Heart right ventricle (tissue), 16 donors: ENCODE measurements at regions of chr1 and their contacts with region 1.

Region 1: GRCh38 chr1:53860967-53861411 is 22.9 kb upstream of the NDC1 start:
- DNase-seq: peak in 1 of 2 donors; percentile 28
- ATAC-seq: peak in 6 of 8 donors; percentile 51 to 72 (median 64)
- H3K4me3 ChIP-seq: no peak overlapping the region
- H3K27ac ChIP-seq: no peak overlapping the region
- H3K4me1 ChIP-seq: no peaks in the 10 kb centered on the region
- H3K27me3 ChIP-seq: no peaks in the 10 kb centered on the region
- CTCF ChIP-seq: peak; percentile 43 to 82 (median 74)

Region 2: GRCh38 chr1:53620061-53620855 is 240.7 kb before region 1 on chr1:
- intact Hi-C with region 1: no loop called
- DNase-seq: no peak
- ATAC-seq: no peak
- H3K4me3 ChIP-seq: no peak overlapping the region
- H3K27ac ChIP-seq: no peak overlapping the region
- H3K4me1 ChIP-seq: no peaks in the 10 kb centered on the region
- H3K27me3 ChIP-seq: no peaks in the 10 kb centered on the region
- CTCF ChIP-seq: no peak

Region 3: GRCh38 chr1:53929246-53929960 is 68.4 kb after region 1 on chr1:
- intact Hi-C with region 1: no loop called
- DNase-seq: no peak
- ATAC-seq: no peak
- H3K4me3 ChIP-seq: no peak overlapping the region
- H3K27ac ChIP-seq: no peak overlapping the region
- H3K4me1 ChIP-seq: no peaks in the 10 kb centered on the region
- H3K27me3 ChIP-seq: no peaks in the 10 kb centered on the region
- CTCF ChIP-seq: no peak

Region 4: DNA sequence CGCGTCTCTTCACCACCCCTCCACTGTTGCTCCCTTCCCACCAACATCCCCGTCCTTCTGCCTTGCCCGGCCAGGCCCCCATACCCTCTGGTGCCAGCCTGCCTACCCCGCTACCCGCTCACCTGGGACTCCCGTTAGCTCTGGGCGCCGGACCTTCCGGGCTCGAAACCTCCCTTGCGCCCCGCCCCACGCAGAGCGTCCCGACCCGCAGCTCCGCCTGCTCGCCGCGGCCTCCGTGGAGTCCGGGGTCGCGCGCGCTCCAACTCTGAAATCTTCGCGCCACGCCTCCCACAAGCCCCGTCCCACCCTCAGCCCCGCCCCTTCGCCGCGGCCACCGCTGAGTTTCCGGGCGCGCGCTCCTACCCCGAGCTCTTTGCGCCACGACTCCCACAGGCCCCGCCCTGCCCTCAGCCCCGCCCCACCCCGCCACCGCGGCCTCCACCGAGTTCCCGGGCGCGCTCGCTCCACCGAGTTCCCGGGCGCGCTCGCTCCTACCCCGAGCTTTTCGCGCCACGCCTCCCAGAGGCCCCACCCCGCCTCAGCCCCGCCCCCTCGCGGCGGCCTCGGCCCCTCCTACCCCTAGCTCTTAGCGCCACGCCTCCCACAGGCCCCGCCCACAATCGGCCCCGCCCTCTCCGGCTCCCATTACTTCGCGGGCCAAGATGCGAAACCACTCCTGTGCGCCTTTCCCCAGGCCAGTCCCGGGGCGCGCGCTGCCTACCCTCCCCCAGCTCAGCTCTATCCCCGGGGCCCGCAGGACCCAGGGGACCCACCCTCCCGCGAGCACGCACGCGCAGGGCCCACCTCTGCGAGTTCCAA is 84.7 kb after region 1 on chr1 and contains the start of gene IFT25:
- intact Hi-C with region 1: loop called in 2 of 10 experiments (anchors 5 kb)
- DNase-seq: peak; percentile 96 to 98
- ATAC-seq: peak; percentile 93 to 98 (median 94)
- H3K4me3 ChIP-seq: peak within 1 kb of the TSS; percentile 59 to 97 (median 87)
- H3K27ac ChIP-seq: peak within 1 kb of the TSS; percentile 83 to 95 (median 89)
- H3K4me1 ChIP-seq: peaks cover 0 to 52% (median 39%) of the 10 kb centered on the region in 9 donors
- H3K27me3 ChIP-seq: no peaks in the 10 kb centered on the region
- CTCF ChIP-seq: peak in 1 of 9 donors; percentile 32
- total RNA-seq, gene IFT25: 7.8 to 16.0 (median 10.7) TPM

Region 5: DNA sequence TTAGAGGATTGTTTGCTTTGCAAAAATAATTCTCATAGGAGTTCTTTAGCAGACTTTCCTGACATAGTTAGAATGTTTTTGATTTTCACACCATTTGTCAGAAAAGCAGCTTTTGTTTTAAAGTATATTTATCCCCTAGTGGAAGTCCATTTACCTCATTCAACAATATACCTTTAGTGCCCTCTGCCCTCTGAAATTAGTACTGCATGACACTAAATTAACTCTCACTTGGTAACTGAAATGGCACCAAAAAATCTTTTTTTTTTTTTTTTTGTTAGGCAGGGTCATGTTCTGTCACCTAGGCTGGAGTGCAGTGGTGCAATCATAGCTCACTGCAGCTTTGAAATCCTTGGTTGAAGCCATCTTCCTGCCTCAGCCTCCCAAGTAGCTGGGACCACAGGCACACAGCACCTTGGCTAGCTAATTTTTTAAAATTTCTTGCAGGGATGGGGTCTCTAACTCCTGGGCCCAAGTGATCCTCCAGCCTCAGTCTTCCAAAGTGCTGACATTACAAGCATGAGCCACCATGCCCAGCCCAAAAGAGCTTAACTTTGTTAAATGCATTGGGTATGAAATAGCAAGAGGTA is 98.8 kb after region 1 on chr1:
- intact Hi-C with region 1: loop called in 4 of 10 experiments (anchors 2 to 5 kb)
- DNase-seq: no peak
- ATAC-seq: no peak
- H3K4me3 ChIP-seq: no peak overlapping the region
- H3K27ac ChIP-seq: no peak overlapping the region
- H3K4me1 ChIP-seq: peaks cover 0 to 18% (median 10%) of the 10 kb centered on the region in 9 donors
- H3K27me3 ChIP-seq: no peaks in the 10 kb centered on the region
- CTCF ChIP-seq: peak; percentile 6 to 66 (median 56)

Region 6: DNA sequence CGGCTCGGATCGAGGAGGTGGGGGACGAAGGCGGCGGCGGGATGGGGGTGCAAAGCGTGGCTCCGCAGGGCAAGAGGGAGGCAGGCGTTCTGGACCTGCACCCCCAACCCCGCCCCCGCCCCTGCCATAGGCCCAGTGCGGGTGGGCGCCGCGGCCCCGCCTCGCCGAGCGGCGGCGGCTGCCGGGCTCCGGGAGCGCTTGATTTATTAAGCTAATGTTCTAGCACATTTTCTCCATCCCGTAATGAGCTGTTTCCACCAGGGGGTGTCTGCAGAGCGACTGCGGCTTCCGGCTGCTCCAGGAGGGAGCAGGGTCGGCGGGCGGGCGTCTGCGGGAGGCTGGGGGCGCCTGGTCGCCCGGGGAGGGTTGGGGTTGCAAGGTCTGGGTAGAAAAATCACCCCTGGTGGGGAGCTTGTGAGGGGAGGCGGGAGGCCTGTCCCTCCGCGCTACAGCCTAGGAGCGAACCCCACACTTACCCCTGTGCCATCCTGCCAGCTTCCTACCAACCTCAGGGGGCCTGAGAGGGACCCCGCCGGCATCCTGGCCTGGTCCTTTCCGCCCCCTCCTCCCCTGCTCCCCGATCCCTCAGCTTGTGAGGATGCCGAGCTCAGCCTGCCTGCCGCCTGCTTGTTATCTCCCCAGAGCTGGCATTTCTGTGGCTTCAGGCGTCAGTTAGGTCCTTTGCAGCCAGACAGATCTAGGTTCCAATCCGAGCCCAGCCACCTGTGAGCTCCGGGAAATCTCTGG is 638.5 kb after region 1 on chr1:
- intact Hi-C with region 1: loop called in 1 of 10 experiments (anchors 10 kb)
- DNase-seq: no peak
- ATAC-seq: peak; percentile 47 to 80 (median 66)
- H3K4me3 ChIP-seq: peak overlapping the region in 9 of 10 donors; percentile 24 to 52 (median 47)
- H3K27ac ChIP-seq: no peak overlapping the region
- H3K4me1 ChIP-seq: peaks cover 0 to 16% (median 13%) of the 10 kb centered on the region in 9 donors
- H3K27me3 ChIP-seq: peaks cover 0 to 63% (median 45%) of the 10 kb centered on the region in 7 donors
- CTCF ChIP-seq: peak in 6 of 9 donors; percentile 41 to 54 (median 46)

Region 7: DNA sequence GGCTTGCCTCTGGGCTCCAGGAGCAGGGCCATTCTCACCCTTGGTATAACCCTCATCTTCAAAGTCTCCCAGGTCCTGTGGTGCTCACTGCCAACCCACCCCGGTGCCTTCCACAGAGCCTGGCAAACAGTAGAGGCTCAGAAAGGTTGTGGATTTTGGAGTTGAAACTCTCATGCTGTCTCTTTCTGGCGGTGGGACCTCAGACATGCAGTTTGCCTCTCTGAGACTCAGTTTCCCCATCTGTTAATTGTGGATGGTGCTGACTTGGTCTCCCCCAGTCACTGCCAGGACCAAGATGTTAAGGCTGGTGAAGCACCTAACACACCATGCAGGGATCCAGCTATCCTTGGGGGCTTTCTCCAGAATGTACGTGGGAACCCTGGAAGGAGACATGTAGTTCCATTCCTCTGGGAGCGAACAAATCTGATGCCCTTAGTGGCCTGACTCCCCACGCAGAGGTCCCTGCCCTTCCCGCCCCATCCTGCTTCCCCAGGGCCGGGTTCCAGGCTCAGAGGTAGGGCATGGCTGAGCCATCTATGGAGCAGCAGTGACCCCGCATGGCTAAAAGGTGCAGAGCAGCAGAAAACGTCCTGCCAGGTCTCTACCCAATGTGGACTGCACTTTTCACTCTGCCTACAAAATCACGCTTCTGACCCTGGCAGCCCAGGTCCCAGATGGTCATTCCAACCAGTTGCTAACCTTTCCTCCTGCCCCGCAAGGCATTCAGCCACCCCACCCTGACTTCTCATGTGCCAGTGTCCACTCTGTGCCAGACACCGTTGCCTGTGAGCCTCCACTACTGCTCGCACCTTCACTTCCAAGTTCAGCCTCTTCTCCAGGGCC is 949.3 kb after region 1 on chr1:
- intact Hi-C with region 1: loop called in 6 of 10 experiments (anchors 5 to 10 kb)
- DNase-seq: peak; percentile 30 to 60
- ATAC-seq: peak; percentile 77 to 90 (median 82)
- H3K4me3 ChIP-seq: no peak overlapping the region
- H3K27ac ChIP-seq: no peak overlapping the region
- H3K4me1 ChIP-seq: peaks cover 0 to 4% (median 0%) of the 10 kb centered on the region in 9 donors
- H3K27me3 ChIP-seq: peaks cover 0 to 8% (median 0%) of the 10 kb centered on the region in 7 donors
- CTCF ChIP-seq: peak; percentile 45 to 84 (median 81)